ENCODE measurements at regions of chr11 and their contacts with region 1.

Region 1: DNA sequence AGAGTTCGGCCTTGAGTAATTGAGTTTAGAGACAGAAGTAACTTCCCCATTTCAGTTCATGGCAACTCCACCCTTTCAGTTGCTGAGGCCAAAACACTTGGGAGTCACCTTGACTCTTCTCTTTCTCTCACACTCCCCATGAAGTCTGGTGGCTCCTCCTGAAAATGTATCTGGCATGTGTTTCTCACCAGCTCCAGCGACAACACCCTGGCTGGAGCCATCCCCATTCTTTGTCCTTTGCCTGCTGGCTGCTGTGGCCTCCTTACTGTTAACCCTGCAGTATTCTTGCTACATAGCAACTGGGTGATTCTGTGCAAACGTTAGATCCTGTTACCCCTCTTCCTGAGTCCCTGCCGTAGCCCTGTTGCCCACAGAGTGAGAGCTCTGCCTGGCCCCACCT is 23.8 kb downstream of the SLC6A5 start:
- DNase-seq: no peak
- ATAC-seq: peak in 3 of 4 donors; percentile 46 to 67 (median 59)
- H3K4me3 ChIP-seq: no peak overlapping the region
- H3K27ac ChIP-seq: no peak overlapping the region
- H3K4me1 ChIP-seq: peaks cover 0 to 6% (median 0%) of the 10 kb centered on the region in 12 donors
- H3K27me3 ChIP-seq: no peaks in the 10 kb centered on the region
- CTCF ChIP-seq: no peak
- POLR2A ChIP-seq: no peak

Region 2: GRCh38 chr11:20530942-20531689 is 92.1 kb before region 1 on chr11:
- intact Hi-C with region 1: no loop called
- DNase-seq: no peak
- ATAC-seq: no peak
- H3K4me3 ChIP-seq: no peak overlapping the region
- H3K27ac ChIP-seq: no peak overlapping the region
- H3K4me1 ChIP-seq: no peaks in the 10 kb centered on the region
- H3K27me3 ChIP-seq: peaks cover 0 to 4% (median 0%) of the 10 kb centered on the region in 9 donors
- CTCF ChIP-seq: no peak
- POLR2A ChIP-seq: no peak

Region 3: DNA sequence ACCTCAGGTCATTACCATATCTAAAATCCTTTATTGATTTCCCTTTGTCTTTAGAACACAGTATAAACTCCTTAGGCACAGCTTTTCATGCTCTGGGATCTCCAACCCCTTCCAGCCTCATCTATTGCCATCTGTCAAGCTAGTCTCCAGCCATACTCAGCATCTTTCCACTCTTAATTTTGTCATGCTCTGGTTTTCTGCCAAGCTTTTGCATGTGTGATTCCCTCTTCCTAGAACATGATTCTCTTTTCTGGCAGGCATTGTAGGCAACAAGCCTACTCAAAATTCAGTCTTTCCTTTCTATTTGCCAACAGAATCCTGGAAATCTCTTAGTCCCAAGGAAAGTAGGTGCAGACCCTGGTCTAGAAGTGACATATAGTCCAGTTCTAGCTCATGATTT is 59.4 kb before region 1 on chr11:
- intact Hi-C with region 1: loop called in 1 of 10 experiments (anchors 10 kb)
- DNase-seq: no peak
- ATAC-seq: no peak
- H3K4me3 ChIP-seq: no peak overlapping the region
- H3K27ac ChIP-seq: no peak overlapping the region
- H3K4me1 ChIP-seq: peaks cover 0 to 30% (median 2%) of the 10 kb centered on the region in 12 donors
- H3K27me3 ChIP-seq: no peaks in the 10 kb centered on the region
- CTCF ChIP-seq: no peak
- POLR2A ChIP-seq: no peak

Region 4: GRCh38 chr11:20688761-20689160 is 65.5 kb after region 1 on chr11:
- intact Hi-C with region 1: no loop called
- DNase-seq: no peak
- ATAC-seq: no peak
- H3K4me3 ChIP-seq: no peak overlapping the region
- H3K27ac ChIP-seq: no peak overlapping the region
- H3K4me1 ChIP-seq: no peaks in the 10 kb centered on the region
- H3K27me3 ChIP-seq: no peaks in the 10 kb centered on the region
- CTCF ChIP-seq: no peak
- POLR2A ChIP-seq: no peak

Region 5: GRCh38 chr11:21289686-21290085 is 666.4 kb after region 1 on chr11:
- intact Hi-C with region 1: no loop called
- DNase-seq: no peak
- ATAC-seq: no peak
- H3K4me3 ChIP-seq: no peak overlapping the region
- H3K27ac ChIP-seq: no peak overlapping the region
- H3K4me1 ChIP-seq: no peaks in the 10 kb centered on the region
- H3K27me3 ChIP-seq: no peaks in the 10 kb centered on the region
- CTCF ChIP-seq: no peak
- POLR2A ChIP-seq: no peak